Adrenal gland (tissue), 19 donors: ENCODE measurements at regions of chr12 and their contacts with region 1.

Region 1: GRCh38 chr12:50986966-50987737 is 34.8 kb downstream of the HIGD1C start:
- DNase-seq: peak; percentile 54 to 70 (median 63)
- H3K4me3 ChIP-seq: no peak overlapping the region
- H3K27ac ChIP-seq: peak overlapping the region in 4 of 5 donors; percentile 13 to 92 (median 32)
- H3K4me1 ChIP-seq: peaks cover 19 to 28% of the 10 kb centered on the region in 2 donors
- H3K27me3 ChIP-seq: no peaks in the 10 kb centered on the region
- CTCF ChIP-seq: peak; percentile 30 to 62 (median 55)
- POLR2A ChIP-seq: no peak

Region 2: DNA sequence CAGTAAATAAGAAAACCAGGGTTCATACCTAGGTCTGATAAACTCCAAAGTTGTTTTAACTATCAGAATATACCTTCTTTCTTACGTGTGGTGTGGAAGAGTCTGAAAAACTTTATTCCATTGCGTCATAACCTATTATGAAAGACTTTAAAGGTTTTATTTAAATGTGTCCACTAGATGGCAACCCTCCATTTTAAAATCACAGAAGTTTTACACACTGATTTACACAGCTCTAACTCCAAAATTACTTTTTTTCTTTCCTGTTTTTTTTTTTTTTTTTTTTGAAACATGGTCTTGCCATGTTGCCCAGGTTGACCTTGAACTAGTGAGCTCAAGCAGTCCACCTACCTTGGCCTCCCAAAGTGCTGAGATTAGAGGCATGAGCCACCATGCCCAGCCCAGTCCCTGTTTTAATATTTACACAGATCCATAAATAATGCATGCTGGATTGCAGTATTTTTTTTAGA is 161.7 kb before region 1 on chr12:
- intact Hi-C with region 1: loop called in 1 of 2 experiments (anchors 5 kb)
- DNase-seq: peak in 5 of 7 donors; percentile 31 to 63 (median 40)
- H3K4me3 ChIP-seq: no peak overlapping the region
- H3K27ac ChIP-seq: peak overlapping the region; percentile 7 to 78 (median 43)
- H3K4me1 ChIP-seq: peaks cover 4 to 12% of the 10 kb centered on the region in 2 donors
- H3K27me3 ChIP-seq: no peaks in the 10 kb centered on the region
- CTCF ChIP-seq: peak; percentile 23 to 90 (median 64)
- POLR2A ChIP-seq: no peak

Region 3: GRCh38 chr12:51377099-51377984 is 390.2 kb after region 1 on chr12:
- intact Hi-C with region 1: no loop called
- DNase-seq: no peak
- H3K4me3 ChIP-seq: no peak overlapping the region
- H3K27ac ChIP-seq: no peak overlapping the region
- H3K4me1 ChIP-seq: no peaks in the 10 kb centered on the region
- H3K27me3 ChIP-seq: no peaks in the 10 kb centered on the region
- CTCF ChIP-seq: no peak
- POLR2A ChIP-seq: no peak